PC-9 (cell line): ENCODE measurements at regions of chr12 and their contacts with region 1.

Region 1: GRCh38 chr12:21677622-21678277 is 20.1 kb upstream of the LDHB start:
- DNase-seq: no peak
- H3K4me3 ChIP-seq: no peak overlapping the region
- H3K27ac ChIP-seq: no peak overlapping the region
- H3K4me1 ChIP-seq: no peaks in the 10 kb centered on the region; the same call in 1 of the 2 replicates
- H3K27me3 ChIP-seq: no peaks in the 10 kb centered on the region
- CTCF ChIP-seq: no peak

Region 2: GRCh38 chr12:21370845-21371449 is 306.8 kb before region 1 on chr12:
- CTCF ChIA-PET with region 1: interaction called, 11 read pairs
- POLR2A ChIA-PET with region 1: no interaction called
- intact Hi-C with region 1: no loop called
- DNase-seq: no peak
- H3K4me3 ChIP-seq: no peak overlapping the region
- H3K27ac ChIP-seq: no peak overlapping the region
- H3K4me1 ChIP-seq: no peaks in the 10 kb centered on the region
- H3K27me3 ChIP-seq: no peaks in the 10 kb centered on the region
- CTCF ChIP-seq: no peak

Region 3: DNA sequence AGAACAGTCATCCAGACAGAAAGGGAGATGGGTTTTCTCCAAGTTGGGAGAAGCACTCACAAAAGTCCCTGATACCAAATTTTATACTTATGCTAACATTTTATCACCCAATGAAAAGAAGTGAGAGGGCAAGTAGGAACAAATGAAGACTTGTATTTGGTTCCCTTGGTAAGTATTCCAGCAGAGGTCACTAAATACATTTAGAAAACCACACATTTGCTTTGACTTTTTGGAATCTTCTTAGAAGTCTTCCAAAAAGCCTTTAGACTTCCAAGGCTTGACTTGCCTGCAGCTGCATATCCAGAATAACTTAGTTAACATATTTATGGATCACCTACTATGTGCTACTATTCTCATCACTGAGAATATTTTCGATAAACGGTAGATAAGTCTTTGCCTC is 70.0 kb before region 1 on chr12:
- CTCF ChIA-PET with region 1: no interaction called
- POLR2A ChIA-PET with region 1: no interaction called
- intact Hi-C with region 1: loop called (anchors 1 kb)
- DNase-seq: no peak
- H3K4me3 ChIP-seq: no peak overlapping the region
- H3K27ac ChIP-seq: no peak overlapping the region
- H3K4me1 ChIP-seq: no peaks in the 10 kb centered on the region
- H3K27me3 ChIP-seq: no peaks in the 10 kb centered on the region
- CTCF ChIP-seq: peak; percentile 44; the same call in 1 of the 2 replicates

Region 4: GRCh38 chr12:21815306-21816062 is 137.7 kb after region 1 on chr12:
- CTCF ChIA-PET with region 1: no interaction called
- POLR2A ChIA-PET with region 1: no interaction called
- intact Hi-C with region 1: no loop called
- DNase-seq: no peak
- H3K4me3 ChIP-seq: no peak overlapping the region
- H3K27ac ChIP-seq: no peak overlapping the region
- H3K4me1 ChIP-seq: no peaks in the 10 kb centered on the region
- H3K27me3 ChIP-seq: no peaks in the 10 kb centered on the region
- CTCF ChIP-seq: no peak

Region 5: GRCh38 chr12:22544038-22544979 is 866.6 kb after region 1 on chr12 and contains the start of gene C2CD5:
- CTCF ChIA-PET with region 1: interaction called, 10 read pairs
- POLR2A ChIA-PET with region 1: no interaction called
- intact Hi-C with region 1: no loop called
- DNase-seq: peak; percentile 90 to 97
- H3K4me3 ChIP-seq: peak within 1 kb of the TSS; percentile 82
- H3K27ac ChIP-seq: peak within 1 kb of the TSS; percentile 71
- H3K4me1 ChIP-seq: peaks cover 9% of the 10 kb centered on the region; the same call in 1 of the 2 replicates
- H3K27me3 ChIP-seq: no peaks in the 10 kb centered on the region
- CTCF ChIP-seq: peak; percentile 32; the same call in 1 of the 2 replicates
- total RNA-seq, gene C2CD5: 27.5 and 28.6 TPM in 2 replicates